ENCODE measurements at regions of chr22 and their contacts with region 1.

Region 1: GRCh38 chr22:30968924-30969539 is at the start of gene TUG1:
- DNase-seq: peak; percentile 99
- H3K4me3 ChIP-seq: peak within 1 kb of the TSS; percentile 57 to 88 (median 86)
- H3K27ac ChIP-seq: peak within 1 kb of the TSS; percentile 95 to 98 (median 96)
- H3K4me1 ChIP-seq: peaks cover 0 to 51% (median 38%) of the 10 kb centered on the region in 4 donors
- H3K27me3 ChIP-seq: no peaks in the 10 kb centered on the region
- CTCF ChIP-seq: no peak
- EP300 ChIP-seq: no peak
- POLR2A ChIP-seq: peak; percentile 78 to 81
- total RNA-seq, gene TUG1: 51.5 to 88.9 (median 54.7) TPM

Region 2: DNA sequence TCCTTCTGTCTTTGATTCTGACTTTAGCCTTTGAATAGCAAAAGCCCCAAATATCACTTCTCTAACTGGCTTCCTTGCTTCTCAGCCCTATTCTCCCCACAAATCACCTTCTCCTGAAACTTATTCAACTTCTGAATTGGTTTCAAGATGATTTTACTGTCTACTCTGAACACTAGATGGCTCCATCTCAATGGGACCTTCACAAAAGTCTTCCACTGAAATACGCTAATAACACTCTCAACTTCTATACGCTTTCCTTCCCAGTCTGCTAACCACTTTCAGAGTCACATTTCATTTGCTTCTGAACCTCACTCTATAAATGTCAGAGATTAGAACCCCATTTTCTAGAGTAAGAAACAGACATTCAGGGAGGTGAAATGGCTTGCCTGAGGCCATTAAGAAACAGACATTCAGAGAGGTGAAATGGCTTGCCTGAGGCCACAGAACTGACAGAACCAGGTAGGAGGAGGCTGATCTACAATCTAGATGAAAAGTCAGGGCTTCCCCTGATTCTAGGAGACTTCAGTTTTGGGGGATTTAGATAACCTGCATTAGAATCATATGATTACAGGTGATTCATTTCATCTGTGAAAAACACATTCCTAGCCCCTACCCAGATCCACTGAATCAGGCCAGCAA is 21.1 kb before region 1 on chr22:
- intact Hi-C with region 1: loop called (anchors 2 kb)
- DNase-seq: no peak
- H3K4me3 ChIP-seq: no peak overlapping the region
- H3K27ac ChIP-seq: peak overlapping the region; percentile 55 to 74 (median 64)
- H3K4me1 ChIP-seq: peaks cover 0 to 26% (median 22%) of the 10 kb centered on the region in 4 donors
- H3K27me3 ChIP-seq: no peaks in the 10 kb centered on the region
- CTCF ChIP-seq: peak; percentile 59 to 85 (median 74)
- EP300 ChIP-seq: no peak
- POLR2A ChIP-seq: no peak

Region 3: GRCh38 chr22:31036671-31037550 is 67.9 kb after region 1 on chr22:
- intact Hi-C with region 1: loop called (anchors 1 kb)
- DNase-seq: peak; percentile 90
- H3K4me3 ChIP-seq: peak overlapping the region in 2 of 4 donors; percentile 2 to 28
- H3K27ac ChIP-seq: peak overlapping the region; percentile 85 to 92 (median 90)
- H3K4me1 ChIP-seq: peaks cover 0 to 58% (median 54%) of the 10 kb centered on the region in 4 donors
- H3K27me3 ChIP-seq: no peaks in the 10 kb centered on the region
- CTCF ChIP-seq: peak in 1 of 4 experiments; percentile 23
- EP300 ChIP-seq: peak in 3 of 4 donors; percentile 48 to 88 (median 84)
- POLR2A ChIP-seq: no peak

Region 4: DNA sequence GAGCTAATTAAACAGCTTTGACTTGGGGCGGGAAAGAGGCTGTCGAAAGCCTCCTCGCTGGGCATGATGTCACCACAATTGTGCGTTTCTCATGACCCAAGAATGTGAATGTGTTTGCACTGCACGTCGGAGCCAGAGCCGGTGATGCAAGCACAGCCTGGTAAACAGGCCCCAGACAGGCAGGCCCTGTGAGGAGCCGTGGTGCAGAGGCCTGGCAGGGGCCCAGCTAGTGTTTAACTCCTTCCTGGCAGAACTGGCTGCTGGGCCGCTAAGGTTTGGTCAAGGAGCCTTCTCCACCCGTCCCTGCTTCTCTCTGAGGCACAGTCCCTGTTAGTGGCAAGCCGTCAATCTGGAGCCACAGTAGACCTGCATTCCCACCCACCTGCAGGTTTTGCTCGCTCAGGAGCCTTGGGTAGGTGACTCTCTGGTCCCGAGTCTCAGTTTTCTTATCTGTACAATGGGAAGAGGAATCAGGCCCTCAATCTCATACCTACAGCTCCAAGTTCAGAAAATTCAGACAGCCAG is 86.7 kb after region 1 on chr22:
- intact Hi-C with region 1: loop called (anchors 2 kb)
- DNase-seq: peak; percentile 99
- H3K4me3 ChIP-seq: no peak overlapping the region
- H3K27ac ChIP-seq: peak overlapping the region; percentile 89 to 97 (median 90)
- H3K4me1 ChIP-seq: peaks cover 0 to 53% (median 45%) of the 10 kb centered on the region in 4 donors
- H3K27me3 ChIP-seq: no peaks in the 10 kb centered on the region
- CTCF ChIP-seq: no peak
- EP300 ChIP-seq: peak; percentile 40 to 99 (median 79)
- POLR2A ChIP-seq: no peak

Region 5: GRCh38 chr22:31080848-31081649 is 112.0 kb after region 1 on chr22 and contains the start of gene SMTN:
- intact Hi-C with region 1: loop called (anchors 1 kb)
- DNase-seq: peak; percentile 97
- H3K4me3 ChIP-seq: peak within 1 kb of the TSS; percentile 67 to 82 (median 80)
- H3K27ac ChIP-seq: peak within 1 kb of the TSS; percentile 96 to 100 (median 99)
- H3K4me1 ChIP-seq: peaks cover 0 to 51% (median 50%) of the 10 kb centered on the region in 4 donors
- H3K27me3 ChIP-seq: no peaks in the 10 kb centered on the region
- CTCF ChIP-seq: no peak
- EP300 ChIP-seq: no peak
- POLR2A ChIP-seq: peak; percentile 97
- total RNA-seq, gene SMTN: 987 to 1,789 (median 1,228) TPM